Tibial artery (tissue), 4 donors: ENCODE measurements at regions of chr4 and their contacts with region 1.

Region 1: GRCh38 chr4:41541687-41542094 is 3.7 kb downstream of the LIMCH1 start:
- DNase-seq: peak; percentile 56 to 67
- H3K4me3 ChIP-seq: peak overlapping the region; percentile 35 to 38
- H3K27ac ChIP-seq: peak overlapping the region; percentile 81 to 84
- H3K4me1 ChIP-seq: peaks cover 0 to 94% (median 52%) of the 10 kb centered on the region in 4 donors
- H3K27me3 ChIP-seq: no peaks in the 10 kb centered on the region
- CTCF ChIP-seq: no peak

Region 2: GRCh38 chr4:41432881-41433280 is 108.8 kb before region 1 on chr4:
- intact Hi-C with region 1: loop called (anchors 10 kb)
- DNase-seq: no peak
- H3K4me3 ChIP-seq: no peak overlapping the region
- H3K27ac ChIP-seq: peak overlapping the region; percentile 66 to 75
- H3K4me1 ChIP-seq: peaks cover 0 to 87% (median 54%) of the 10 kb centered on the region in 4 donors
- H3K27me3 ChIP-seq: no peaks in the 10 kb centered on the region
- CTCF ChIP-seq: no peak